Activated CD4-positive, alpha-beta T cell treated with anti-CD3 and anti-CD28 coated beads, Interleukin-2, amount 10 ng/mL, durations not matched to agents 7 days and 5 days (primary cell): ENCODE measurements at regions of chr5 and their contacts with region 1.

Region 1: DNA sequence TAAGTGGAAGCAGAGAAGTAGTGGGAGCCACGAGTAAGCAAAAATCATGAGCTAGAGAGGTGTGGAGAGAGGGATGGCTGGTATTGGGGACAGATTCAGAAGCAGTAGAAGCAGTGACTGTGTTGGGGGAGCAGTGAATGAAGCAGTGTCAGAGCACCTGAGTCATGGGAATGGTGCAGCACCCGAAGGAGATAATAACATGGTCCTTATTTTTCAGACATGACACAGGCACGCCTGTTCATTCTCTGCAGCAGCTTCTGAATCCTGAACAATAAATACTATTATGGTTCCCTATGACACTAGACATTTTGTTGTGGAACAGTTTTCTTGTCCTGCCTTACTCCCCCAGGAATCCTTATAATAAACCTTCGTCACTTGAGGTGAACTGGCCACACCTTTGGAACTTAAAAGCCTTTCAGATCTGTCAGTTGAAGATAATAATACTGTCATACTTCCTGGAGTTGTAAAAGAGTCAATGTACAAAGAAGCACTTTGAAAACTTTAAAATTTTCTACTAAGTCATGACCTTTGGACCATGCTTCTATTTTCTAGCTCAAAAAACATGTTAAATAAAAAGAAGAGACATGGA is 7.0 kb upstream of the RASA1 start:
- DNase-seq: no peak
- H3K4me3 Mint-ChIP-seq: no peak overlapping the region
- H3K27ac Mint-ChIP-seq: no peak overlapping the region
- H3K4me1 Mint-ChIP-seq: peaks cover 8% of the 10 kb centered on the region
- H3K27me3 Mint-ChIP-seq: peaks cover 2% of the 10 kb centered on the region

Region 2: GRCh38 chr5:87137283-87137682 is 123.4 kb before region 1 on chr5:
- CTCF ChIA-PET with region 1: no interaction called
- POLR2A ChIA-PET with region 1: interaction called, 12 read pairs
- DNase-seq: no peak
- H3K4me3 Mint-ChIP-seq: no peak overlapping the region
- H3K27ac Mint-ChIP-seq: no peak overlapping the region
- H3K4me1 Mint-ChIP-seq: no peaks in the 10 kb centered on the region
- H3K27me3 Mint-ChIP-seq: no peaks in the 10 kb centered on the region

Region 3: DNA sequence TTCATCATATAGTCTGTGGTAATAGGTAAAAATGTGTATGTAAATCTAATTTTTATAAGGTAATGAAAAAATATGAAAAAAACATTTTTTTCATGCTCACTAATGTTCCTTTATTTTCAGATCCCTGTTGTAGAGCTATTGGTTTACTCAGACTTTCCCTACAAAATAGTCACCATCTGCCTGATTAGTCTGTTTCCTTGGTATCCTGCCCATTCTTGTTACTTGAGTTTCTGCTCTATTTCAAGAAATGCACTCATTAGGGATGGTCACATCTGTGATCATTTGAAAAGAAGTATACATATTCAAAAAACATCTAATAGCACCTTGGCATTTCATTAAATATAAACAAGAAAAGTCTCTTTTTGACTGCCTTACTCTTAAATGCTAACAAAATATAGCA is 14.6 kb before region 1 on chr5:
- CTCF ChIA-PET with region 1: no interaction called
- POLR2A ChIA-PET with region 1: no interaction called
- DNase-seq: no peak
- H3K4me3 Mint-ChIP-seq: no peak overlapping the region
- H3K27ac Mint-ChIP-seq: no peak overlapping the region
- H3K4me1 Mint-ChIP-seq: peaks cover 2% of the 10 kb centered on the region
- H3K27me3 Mint-ChIP-seq: no peaks in the 10 kb centered on the region